ENCODE measurements at regions of chr20 and their contacts with region 1.

Region 1: DNA sequence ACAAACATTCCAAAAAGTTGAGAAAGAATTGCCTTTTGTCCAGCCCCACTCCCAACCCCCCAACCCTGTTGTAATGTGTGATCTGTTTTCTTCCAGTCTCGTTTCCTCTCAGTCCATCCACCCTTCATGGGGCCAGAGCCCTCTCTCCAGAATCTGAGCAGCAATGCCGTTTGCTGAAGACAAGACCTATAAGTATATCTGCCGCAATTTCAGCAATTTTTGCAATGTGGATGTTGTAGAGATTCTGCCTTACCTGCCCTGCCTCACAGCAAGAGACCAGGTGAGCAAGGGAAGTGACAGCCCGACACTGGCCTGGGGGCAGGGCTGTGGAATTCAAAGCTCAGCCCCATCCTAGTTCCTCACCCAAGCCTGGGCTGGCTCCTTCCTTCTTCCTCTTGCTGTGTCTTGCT is 7.8 kb downstream of the MAVS start:
- DNase-seq: no peak
- H3K4me3 ChIP-seq: no peak overlapping the region
- H3K27ac ChIP-seq: no peak overlapping the region
- H3K4me1 ChIP-seq: no peaks in the 10 kb centered on the region
- H3K27me3 ChIP-seq: no peaks in the 10 kb centered on the region
- CTCF ChIP-seq: no peak

Region 2: DNA sequence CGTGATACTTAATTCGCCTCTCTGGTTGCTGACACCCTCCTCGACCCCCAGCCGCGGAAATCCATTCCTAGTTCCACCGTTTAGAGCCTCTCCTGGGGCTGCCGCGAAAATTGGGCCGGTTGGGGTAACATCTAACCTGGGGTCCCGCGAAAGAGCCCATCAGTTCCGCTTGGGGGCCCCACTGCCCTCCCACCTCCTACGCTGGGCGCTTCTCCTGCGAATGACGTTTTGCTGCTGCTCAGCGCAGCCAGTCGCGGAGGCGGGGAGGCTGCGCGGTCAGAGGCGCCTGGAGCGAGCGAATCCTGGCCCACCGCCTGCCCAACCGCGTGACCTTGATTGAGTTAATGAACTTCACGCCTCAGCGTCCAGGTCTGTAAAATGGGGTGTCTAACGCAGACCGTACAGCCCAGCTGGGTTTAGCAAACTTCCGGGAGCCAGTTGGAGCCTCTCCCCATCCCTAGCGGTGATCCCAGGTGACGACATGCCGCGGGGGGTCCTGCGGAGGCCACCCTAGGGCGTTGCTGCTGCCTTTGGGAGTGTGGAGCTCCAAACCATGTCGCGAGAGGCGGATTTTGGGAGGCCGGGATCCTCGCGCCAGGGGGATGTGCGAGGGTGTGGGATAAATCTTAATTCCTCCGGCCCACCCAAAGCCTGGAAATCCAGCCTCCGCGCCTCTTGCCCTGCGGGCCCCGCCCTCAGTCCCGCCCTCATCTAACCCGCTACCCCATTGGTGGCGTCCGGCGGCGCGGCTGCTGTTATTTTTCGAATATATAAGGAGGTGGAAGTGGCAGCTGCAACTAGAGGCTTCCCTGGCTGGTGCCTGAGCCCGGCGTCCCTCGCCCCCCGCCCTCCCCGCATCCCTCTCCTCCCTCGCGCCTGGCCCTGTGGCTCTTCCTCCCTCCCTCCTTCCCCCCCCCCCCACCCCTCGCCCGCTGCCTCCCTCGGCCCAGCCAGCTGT is 58.7 kb before region 1 on chr20 and contains the start of gene CDC25B:
- CTCF ChIA-PET with region 1: no interaction called
- dilution Hi-C with region 1: no loop called
- in situ Hi-C with region 1: loop called in 1 of 2 experiments (anchors 10 kb)
- intact Hi-C with region 1: no loop called
- DNase-seq: peak; percentile 89
- H3K4me3 ChIP-seq: peak within 1 kb of the TSS; percentile 74 to 89 (median 77)
- H3K27ac ChIP-seq: peak within 1 kb of the TSS; percentile 81
- H3K4me1 ChIP-seq: peaks cover 23% of the 10 kb centered on the region
- H3K27me3 ChIP-seq: no peaks in the 10 kb centered on the region
- CTCF ChIP-seq: peak; percentile 32 to 45
- total RNA-seq, gene CDC25B: 5.5 to 55.5 TPM

Region 3: GRCh38 chr20:3839169-3839727 is 15.2 kb before region 1 on chr20:
- CTCF ChIA-PET with region 1: no interaction called
- dilution Hi-C with region 1: no loop called
- in situ Hi-C with region 1: no loop called
- intact Hi-C with region 1: no loop called
- DNase-seq: no peak
- H3K4me3 ChIP-seq: no peak overlapping the region
- H3K27ac ChIP-seq: no peak overlapping the region
- H3K4me1 ChIP-seq: no peaks in the 10 kb centered on the region
- H3K27me3 ChIP-seq: no peaks in the 10 kb centered on the region
- CTCF ChIP-seq: no peak

Region 4: GRCh38 chr20:3911956-3912355 is 57.5 kb after region 1 on chr20:
- CTCF ChIA-PET with region 1: no interaction called
- dilution Hi-C with region 1: no loop called
- in situ Hi-C with region 1: no loop called
- intact Hi-C with region 1: no loop called
- DNase-seq: no peak
- H3K4me3 ChIP-seq: no peak overlapping the region
- H3K27ac ChIP-seq: no peak overlapping the region
- H3K4me1 ChIP-seq: peaks cover 6% of the 10 kb centered on the region
- H3K27me3 ChIP-seq: no peaks in the 10 kb centered on the region
- CTCF ChIP-seq: no peak

Region 5: GRCh38 chr20:4272225-4272624 is 417.8 kb after region 1 on chr20:
- CTCF ChIA-PET with region 1: no interaction called
- dilution Hi-C with region 1: no loop called
- in situ Hi-C with region 1: no loop called
- intact Hi-C with region 1: no loop called
- DNase-seq: peak; percentile 56
- H3K4me3 ChIP-seq: no peak overlapping the region
- H3K27ac ChIP-seq: no peak overlapping the region
- H3K4me1 ChIP-seq: peaks cover 2% of the 10 kb centered on the region
- H3K27me3 ChIP-seq: no peaks in the 10 kb centered on the region
- CTCF ChIP-seq: no peak

Measured in mammary epithelial cell (primary cell).